OCI-LY7 (cell line): ENCODE measurements at regions of chr11 and their contacts with region 1.

Region 1: DNA sequence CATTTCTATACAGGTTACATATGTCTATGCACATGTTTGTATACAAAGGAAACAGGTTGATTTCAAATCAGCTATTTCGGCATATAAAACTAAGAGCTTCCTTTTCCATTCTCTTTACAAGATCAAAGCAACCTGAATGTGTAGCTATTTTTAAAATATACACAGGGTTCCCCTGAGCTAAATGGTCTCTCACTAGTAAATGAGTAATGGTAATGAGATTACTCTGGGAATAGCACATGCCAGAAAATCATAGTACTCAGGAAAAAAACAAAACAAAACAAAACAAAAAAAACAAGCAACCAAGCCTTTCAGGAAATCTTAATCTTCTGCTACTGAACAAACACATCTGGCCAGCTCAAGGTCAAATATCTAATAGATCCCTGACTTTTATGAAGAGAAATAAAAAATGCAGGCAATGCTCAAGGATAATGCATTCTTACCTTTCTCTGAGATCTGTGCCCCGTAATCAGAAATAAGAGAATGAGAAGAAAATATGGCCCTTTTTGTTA is 156.6 kb upstream of the POU2AF2 start:
- DNase-seq: no peak
- H3K4me3 ChIP-seq: no peak overlapping the region
- H3K27ac ChIP-seq: no peak overlapping the region
- H3K4me1 ChIP-seq: peaks cover 7% of the 10 kb centered on the region
- CTCF ChIP-seq: no peak

Region 2: GRCh38 chr11:111077530-111078322 is 11.2 kb before region 1 on chr11:
- CTCF ChIA-PET with region 1: no interaction called
- POLR2A ChIA-PET with region 1: interaction called, 12 read pairs
- intact Hi-C with region 1: no loop called
- DNase-seq: no peak
- H3K4me3 ChIP-seq: no peak overlapping the region
- H3K27ac ChIP-seq: no peak overlapping the region
- H3K4me1 ChIP-seq: no peaks in the 10 kb centered on the region
- CTCF ChIP-seq: no peak